ENCODE measurements at regions of chrX and their contacts with region 1.

Region 1: DNA sequence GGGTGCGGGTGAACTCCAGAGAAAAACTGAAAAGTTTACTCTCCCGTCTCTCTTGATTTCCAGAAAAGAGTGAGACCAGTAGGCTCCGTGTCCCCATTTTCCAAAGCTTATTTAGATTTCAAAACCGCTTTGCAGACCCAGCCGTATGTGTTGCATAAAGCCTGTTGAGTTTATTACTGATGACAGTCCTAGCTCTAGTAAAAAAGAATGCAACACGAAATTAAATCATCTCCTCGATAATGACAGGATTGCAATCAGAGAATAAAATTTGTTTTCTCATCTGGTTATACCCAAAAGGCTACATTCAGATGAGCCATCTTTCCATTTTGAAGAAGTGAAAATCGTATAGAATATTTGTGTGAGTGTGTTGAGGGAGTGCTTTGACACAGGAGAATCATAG is 16.1 kb upstream of the VCX3A start:
- DNase-seq: no peak
- H3K4me3 ChIP-seq: no peak overlapping the region
- H3K27ac ChIP-seq: no peak overlapping the region
- H3K4me1 ChIP-seq: no peaks in the 10 kb centered on the region
- H3K27me3 ChIP-seq: no peaks in the 10 kb centered on the region
- CTCF ChIP-seq: no peak

Region 2: GRCh38 chrX:6517376-6517775 is 33.6 kb before region 1 on chrX:
- CTCF ChIA-PET with region 1: no interaction called
- dilution Hi-C with region 1: no loop called
- in situ Hi-C with region 1: no loop called
- intact Hi-C with region 1: no loop called
- DNase-seq: no peak
- H3K4me3 ChIP-seq: no peak overlapping the region
- H3K27ac ChIP-seq: no peak overlapping the region
- H3K4me1 ChIP-seq: no peaks in the 10 kb centered on the region
- H3K27me3 ChIP-seq: no peaks in the 10 kb centered on the region
- CTCF ChIP-seq: no peak

Region 3: DNA sequence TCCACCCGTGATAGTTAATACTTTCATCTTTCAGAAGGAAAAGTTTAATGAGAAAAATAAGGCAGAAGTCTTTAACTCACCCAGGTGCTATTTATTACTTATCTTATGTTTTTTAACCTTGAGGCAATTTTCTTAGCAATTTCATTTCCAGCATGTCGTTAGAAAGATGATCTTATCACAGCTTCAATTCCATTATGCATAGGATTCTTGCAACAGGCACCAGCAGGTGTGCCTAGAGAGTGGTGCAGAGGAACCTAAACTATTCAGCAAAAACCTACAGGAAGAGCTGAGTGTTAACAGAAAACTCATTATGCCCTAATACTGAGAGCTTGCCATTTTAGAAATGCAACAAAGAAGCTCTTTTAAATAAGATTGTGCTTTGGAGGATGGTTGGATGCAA is 38.0 kb after region 1 on chrX:
- CTCF ChIA-PET with region 1: no interaction called
- dilution Hi-C with region 1: no loop called
- in situ Hi-C with region 1: no loop called
- intact Hi-C with region 1: no loop called
- DNase-seq: no peak
- H3K4me3 ChIP-seq: no peak overlapping the region
- H3K27ac ChIP-seq: no peak overlapping the region
- H3K4me1 ChIP-seq: no peaks in the 10 kb centered on the region
- H3K27me3 ChIP-seq: no peaks in the 10 kb centered on the region
- CTCF ChIP-seq: no peak

Region 4: DNA sequence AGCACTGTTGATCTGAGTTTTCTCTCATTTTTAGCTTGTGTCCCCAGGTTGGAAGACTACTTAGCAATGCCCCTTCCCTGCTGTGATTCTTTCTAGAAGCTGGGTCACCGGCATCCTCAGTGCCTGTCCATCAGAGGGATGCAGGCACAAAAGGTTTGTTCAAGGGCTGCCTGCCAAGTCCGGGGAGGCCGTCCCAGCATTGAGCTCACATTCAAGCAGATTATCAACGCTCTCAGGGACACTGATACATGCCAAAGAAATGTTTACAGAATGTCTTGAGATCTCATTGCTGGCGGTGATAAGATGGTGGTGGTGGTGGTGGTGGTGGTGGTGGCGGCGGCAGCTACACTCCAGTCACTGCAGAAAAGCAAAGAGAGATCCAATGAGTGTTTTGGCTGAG is 63.5 kb after region 1 on chrX:
- CTCF ChIA-PET with region 1: no interaction called
- dilution Hi-C with region 1: loop called (anchors 5 kb)
- in situ Hi-C with region 1: no loop called
- intact Hi-C with region 1: no loop called
- DNase-seq: no peak
- H3K4me3 ChIP-seq: no peak overlapping the region
- H3K27ac ChIP-seq: no peak overlapping the region
- H3K4me1 ChIP-seq: no peaks in the 10 kb centered on the region
- H3K27me3 ChIP-seq: no peaks in the 10 kb centered on the region
- CTCF ChIP-seq: no peak

Measured in mammary epithelial cell (primary cell).